Naive thymus-derived CD4-positive, alpha-beta T cell (primary cell): ENCODE measurements at regions of chr16 and their contacts with region 1.

Region 1: DNA sequence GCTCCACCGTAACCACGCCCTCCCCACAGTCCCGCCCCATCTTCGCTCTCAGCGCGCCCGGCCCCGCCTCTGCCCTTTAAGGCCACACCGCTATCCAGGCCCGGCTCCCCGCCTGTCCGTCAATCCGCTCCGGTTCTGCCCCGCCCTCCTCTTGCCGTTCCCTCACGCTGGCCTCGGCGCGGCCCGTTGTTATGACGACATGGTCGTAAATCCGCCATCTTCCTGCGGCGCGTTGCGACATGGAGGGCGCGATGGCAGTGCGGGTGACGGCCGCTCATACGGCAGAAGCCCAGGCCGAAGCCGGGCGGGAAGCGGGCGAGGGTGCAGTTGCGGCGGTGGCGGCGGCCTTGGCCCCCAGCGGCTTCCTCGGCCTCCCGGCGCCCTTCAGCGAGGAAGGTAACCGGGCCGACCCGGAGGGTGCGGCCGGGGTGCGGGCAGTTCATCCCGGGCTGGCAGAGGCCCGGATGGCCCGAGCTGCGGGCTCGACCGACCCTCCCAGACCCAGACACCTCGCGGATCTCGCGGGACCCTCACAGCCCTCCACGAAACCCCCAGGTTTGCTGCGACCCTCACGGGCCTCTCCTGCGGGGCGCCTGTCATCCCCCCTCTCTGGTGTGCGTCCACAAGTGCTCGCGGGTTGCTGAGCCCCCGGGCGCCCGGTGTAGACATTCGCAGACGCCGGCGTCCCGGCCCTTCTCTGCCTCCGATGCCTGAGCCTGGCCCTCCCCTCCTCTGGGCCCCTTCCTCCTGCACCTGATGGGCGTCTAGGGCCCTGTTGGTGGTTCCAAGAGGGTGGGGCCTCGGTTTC is at the start of gene E4F1:
- DNase-seq: peak; percentile 91 to 99 (median 97)
- ATAC-seq: peak; percentile 99
- H3K4me3 ChIP-seq: peak within 1 kb of the TSS; percentile 81
- H3K4me3 Mint-ChIP-seq: peak within 1 kb of the TSS; percentile 79 to 91 (median 88)
- H3K27ac ChIP-seq: peak within 1 kb of the TSS; percentile 81
- H3K27ac Mint-ChIP-seq: peak within 1 kb of the TSS; percentile 45 to 92 (median 86)
- H3K4me1 ChIP-seq: peaks cover 7 to 9% of the 10 kb centered on the region in 2 donors
- H3K4me1 Mint-ChIP-seq: peaks cover 0 to 25% (median 19%) of the 10 kb centered on the region in 7 donors
- H3K27me3 ChIP-seq: no peaks in the 10 kb centered on the region
- H3K27me3 Mint-ChIP-seq: peaks cover 0 to 3% (median 0%) of the 10 kb centered on the region in 5 donors
- total RNA-seq, gene E4F1: 31.3 to 45.6 (median 36.8) TPM

Region 2: GRCh38 chr16:1300664-1301476 is 922.7 kb before region 1 on chr16:
- CTCF ChIA-PET with region 1: no interaction called
- POLR2A ChIA-PET with region 1: no interaction called
- intact Hi-C with region 1: no loop called
- DNase-seq: peak; percentile 43 to 83 (median 67)
- ATAC-seq: peak; percentile 82
- H3K4me3 ChIP-seq: no peak overlapping the region
- H3K4me3 Mint-ChIP-seq: peak overlapping the region in 1 of 10 donors; percentile 55
- H3K27ac ChIP-seq: no peak overlapping the region
- H3K27ac Mint-ChIP-seq: no peak overlapping the region
- H3K4me1 ChIP-seq: peaks cover under 1 to 14% of the 10 kb centered on the region in 2 donors
- H3K4me1 Mint-ChIP-seq: peaks cover 7 to 19% (median 9%) of the 10 kb centered on the region in 7 donors
- H3K27me3 ChIP-seq: no peaks in the 10 kb centered on the region
- H3K27me3 Mint-ChIP-seq: peaks cover 4 to 16% (median 5%) of the 10 kb centered on the region in 5 donors

Region 3: DNA sequence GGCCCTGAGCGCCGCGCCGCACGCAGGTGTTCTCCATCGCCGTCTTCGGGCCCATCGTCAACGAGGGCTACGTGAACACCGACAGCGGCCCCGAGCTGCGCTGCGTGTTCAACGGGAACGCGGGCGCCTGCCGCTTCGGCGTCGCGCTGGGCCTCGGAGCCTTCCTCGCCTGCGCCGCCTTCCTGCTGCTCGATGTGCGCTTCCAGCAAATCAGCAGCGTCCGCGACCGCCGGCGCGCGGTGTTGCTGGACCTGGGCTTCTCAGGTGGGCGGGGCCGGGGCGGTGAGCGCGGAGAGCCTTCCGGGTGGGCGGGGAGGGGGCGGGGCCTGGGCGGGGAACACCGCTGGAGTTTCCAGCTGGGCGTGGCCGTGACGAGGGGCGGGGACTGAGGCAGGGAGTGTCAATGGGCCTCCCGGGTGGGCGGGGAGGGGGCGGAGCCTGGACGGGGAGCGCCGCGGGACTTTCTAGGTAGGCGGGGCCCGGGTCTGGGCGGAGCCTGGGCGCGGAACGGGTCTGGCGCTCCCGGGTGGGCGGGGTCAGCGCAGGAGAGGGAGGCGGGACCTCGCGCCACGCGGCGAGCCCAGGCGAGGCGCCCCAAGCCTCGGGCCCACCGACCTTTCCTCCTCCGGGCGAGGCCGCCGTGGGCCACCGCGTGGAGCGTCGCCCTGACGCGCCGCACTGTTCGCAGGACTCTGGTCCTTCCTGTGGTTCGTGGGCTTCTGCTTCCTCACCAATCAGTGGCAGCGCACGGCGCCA is 231.5 kb before region 1 on chr16:
- CTCF ChIA-PET with region 1: no interaction called
- POLR2A ChIA-PET with region 1: no interaction called
- intact Hi-C with region 1: loop called in 1 of 2 experiments (anchors 10 kb)
- DNase-seq: peak; percentile 85 to 98 (median 92)
- ATAC-seq: peak; percentile 95
- H3K4me3 ChIP-seq: peak overlapping the region; percentile 39
- H3K4me3 Mint-ChIP-seq: peak overlapping the region in 9 of 10 donors; percentile 45 to 82 (median 75)
- H3K27ac ChIP-seq: peak overlapping the region; percentile 54
- H3K27ac Mint-ChIP-seq: peak overlapping the region in 7 of 9 donors; percentile 22 to 82 (median 62)
- H3K4me1 ChIP-seq: peaks cover 15 to 16% of the 10 kb centered on the region in 2 donors
- H3K4me1 Mint-ChIP-seq: peaks cover 5 to 33% (median 22%) of the 10 kb centered on the region in 7 donors
- H3K27me3 ChIP-seq: peaks cover 0 to 3% of the 10 kb centered on the region in 2 donors
- H3K27me3 Mint-ChIP-seq: peaks cover 8 to 14% (median 10%) of the 10 kb centered on the region in 5 donors

Region 4: DNA sequence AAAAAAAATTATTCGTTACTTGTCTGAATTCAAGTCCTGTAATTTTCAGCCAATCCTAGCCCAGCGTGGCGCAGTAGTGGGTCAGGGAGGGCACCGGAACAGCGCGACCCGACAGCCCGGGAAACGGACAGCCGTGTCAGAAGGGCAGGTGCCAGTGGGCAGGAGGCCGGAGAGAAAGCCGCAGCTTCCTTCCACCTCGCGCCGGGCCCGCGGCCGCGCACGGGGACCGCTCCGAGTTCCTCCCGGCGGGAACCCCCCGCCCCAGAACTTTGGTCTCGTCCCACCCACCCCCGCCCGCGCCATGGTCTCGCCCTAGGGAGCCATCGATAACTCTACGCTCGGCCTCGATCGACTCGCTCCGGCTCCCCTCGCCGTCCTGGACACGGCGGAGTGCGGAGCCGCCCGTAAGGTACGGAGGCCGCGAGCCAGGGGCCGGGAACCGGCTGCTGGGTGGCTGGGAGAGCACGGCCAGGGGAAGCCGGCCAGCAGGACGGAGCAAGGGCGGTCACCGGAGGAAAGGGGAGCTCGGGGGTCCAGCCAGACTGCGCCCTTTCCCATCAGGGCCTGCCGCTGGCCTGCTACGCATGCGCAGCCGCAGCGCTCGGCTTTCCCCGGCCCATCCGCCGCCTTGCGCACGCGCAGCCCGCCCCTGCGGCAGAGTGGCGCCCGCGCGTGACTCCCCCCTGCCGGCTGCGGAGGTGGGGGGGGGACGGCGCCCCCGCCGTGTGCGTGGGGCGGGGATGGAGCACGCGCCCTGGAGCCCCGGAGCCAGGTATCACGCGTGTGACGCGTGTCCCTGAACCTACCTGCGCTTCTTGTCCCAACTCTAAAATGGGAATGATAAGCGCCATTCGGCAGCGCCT is 18.2 kb before region 1 on chr16 and contains the start of gene MLST8:
- CTCF ChIA-PET with region 1: no interaction called
- POLR2A ChIA-PET with region 1: interaction called, 10 read pairs
- intact Hi-C with region 1: loop called (anchors 1 kb)
- DNase-seq: peak; percentile 88 to 100 (median 98)
- ATAC-seq: peak; percentile 97
- H3K4me3 ChIP-seq: peak within 1 kb of the TSS; percentile 93
- H3K4me3 Mint-ChIP-seq: peak within 1 kb of the TSS; percentile 80 to 95 (median 88)
- H3K27ac ChIP-seq: peak within 1 kb of the TSS; percentile 97
- H3K27ac Mint-ChIP-seq: peak within 1 kb of the TSS; percentile 70 to 91 (median 86)
- H3K4me1 ChIP-seq: peaks cover 11 to 13% of the 10 kb centered on the region in 2 donors
- H3K4me1 Mint-ChIP-seq: peaks cover 7 to 29% (median 21%) of the 10 kb centered on the region in 7 donors
- H3K27me3 ChIP-seq: no peaks in the 10 kb centered on the region
- H3K27me3 Mint-ChIP-seq: peaks cover 0 to 11% (median 0%) of the 10 kb centered on the region in 5 donors
- total RNA-seq, gene MLST8: 25.1 to 41.2 (median 35.5) TPM

Region 5: GRCh38 chr16:2513405-2514322 is 290.1 kb after region 1 on chr16 and contains the start of gene ATP6V0C:
- CTCF ChIA-PET with region 1: no interaction called
- POLR2A ChIA-PET with region 1: no interaction called
- intact Hi-C with region 1: loop called in 1 of 2 experiments (anchors 10 kb)
- DNase-seq: peak; percentile 89 to 98 (median 94)
- ATAC-seq: peak; percentile 87
- H3K4me3 ChIP-seq: peak within 1 kb of the TSS; percentile 71
- H3K4me3 Mint-ChIP-seq: peak within 1 kb of the TSS; percentile 85 to 94 (median 91)
- H3K27ac ChIP-seq: peak within 1 kb of the TSS; percentile 100
- H3K27ac Mint-ChIP-seq: peak within 1 kb of the TSS; percentile 90 to 98 (median 96)
- H3K4me1 ChIP-seq: peaks cover 31 to 44% of the 10 kb centered on the region in 2 donors
- H3K4me1 Mint-ChIP-seq: peaks cover 36 to 60% (median 48%) of the 10 kb centered on the region in 7 donors
- H3K27me3 ChIP-seq: no peaks in the 10 kb centered on the region
- H3K27me3 Mint-ChIP-seq: peaks cover 0 to 3% (median 0%) of the 10 kb centered on the region in 5 donors
- total RNA-seq, gene ATP6V0C: 98.2 to 303 (median 113) TPM